ENCODE measurements at regions of chrX and their contacts with region 1.

Region 1: GRCh38 chrX:118495061-118495921 is at the start of gene DOCK11:
- DNase-seq: peak; percentile 91
- ATAC-seq: peak; percentile 76
- H3K4me3 Mint-ChIP-seq: peak within 1 kb of the TSS; percentile 99
- H3K27ac Mint-ChIP-seq: peak within 1 kb of the TSS; percentile 99
- H3K4me1 Mint-ChIP-seq: peaks cover 23% of the 10 kb centered on the region
- H3K27me3 Mint-ChIP-seq: no peaks in the 10 kb centered on the region
- total RNA-seq, gene DOCK11: 57.1 to 63.1 TPM

Region 2: DNA sequence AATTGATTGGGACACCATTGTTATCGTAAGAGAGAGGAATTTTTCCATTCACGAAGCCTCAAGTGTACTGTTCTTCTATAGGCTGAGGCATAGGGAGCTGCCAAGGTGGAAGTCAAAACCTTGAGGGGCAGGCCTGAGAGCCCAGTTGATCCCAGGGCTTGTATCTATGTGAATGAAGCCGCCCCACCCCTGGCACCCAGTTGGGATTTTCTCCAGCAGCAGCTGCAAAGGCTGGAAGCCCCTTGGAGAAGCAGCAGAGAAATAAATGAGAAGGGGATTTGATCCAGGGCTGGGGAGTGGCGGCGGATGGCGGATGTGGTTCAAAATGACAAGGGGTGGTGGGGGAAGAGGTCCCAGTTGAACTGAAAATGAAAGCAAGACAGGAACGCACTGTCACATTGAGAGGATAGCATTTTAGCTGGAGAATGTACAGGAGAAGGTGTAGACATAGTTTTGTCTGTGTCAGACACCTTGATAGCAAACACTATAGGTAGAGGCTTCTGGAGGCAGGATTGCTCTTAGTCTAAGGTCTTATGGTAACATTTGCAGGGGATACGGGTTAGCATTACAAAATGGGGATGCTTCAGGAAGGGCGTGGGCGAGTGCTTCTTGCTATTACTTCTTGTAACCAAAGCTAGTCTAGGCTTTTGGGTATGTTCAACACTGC is 32.9 kb after region 1 on chrX:
- CTCF ChIA-PET with region 1: interaction called, 20 read pairs
- DNase-seq: peak; percentile 77
- ATAC-seq: peak; percentile 82
- H3K4me3 Mint-ChIP-seq: peak overlapping the region; percentile 96
- H3K27ac Mint-ChIP-seq: peak overlapping the region; percentile 100
- H3K4me1 Mint-ChIP-seq: peaks cover 70% of the 10 kb centered on the region
- H3K27me3 Mint-ChIP-seq: no peaks in the 10 kb centered on the region

Region 3: DNA sequence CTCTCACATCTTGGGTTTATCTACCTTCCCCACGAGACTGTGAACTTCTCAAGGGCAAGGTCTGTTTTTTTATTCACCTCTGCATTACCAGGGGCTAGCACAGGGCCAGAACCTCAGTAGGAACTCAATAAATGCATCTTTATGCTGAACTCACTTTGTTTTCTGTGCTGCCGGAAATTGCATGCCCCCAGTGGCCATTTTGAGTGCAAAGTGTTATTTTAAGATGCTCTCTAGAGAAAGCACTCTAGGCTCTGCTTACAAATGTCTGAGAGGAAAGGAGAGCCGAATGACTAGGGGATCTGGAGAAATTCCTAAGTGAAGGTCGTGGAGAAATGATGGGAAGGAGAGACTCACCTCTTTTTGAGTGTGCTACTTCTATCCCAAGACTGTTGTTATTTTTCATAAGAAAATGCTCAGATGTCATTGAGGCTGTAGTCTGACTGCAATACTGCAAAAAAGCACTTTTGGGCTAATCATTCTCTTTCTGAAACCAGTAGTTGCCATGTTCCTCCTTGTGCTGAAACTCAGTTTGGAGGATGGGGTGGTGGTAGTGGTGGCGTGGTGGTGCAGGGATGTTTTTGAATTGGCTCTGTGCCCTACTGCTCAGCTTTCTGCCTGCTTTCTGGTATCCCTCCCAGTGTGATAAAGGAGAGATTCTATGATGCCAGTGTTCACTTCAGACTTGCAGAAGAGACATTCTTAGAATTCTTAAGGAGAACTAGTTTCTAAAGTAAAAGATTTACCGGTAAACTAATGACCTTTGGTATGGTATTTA is 41.6 kb after region 1 on chrX:
- CTCF ChIA-PET with region 1: interaction called, 18 read pairs
- DNase-seq: peak; percentile 71
- ATAC-seq: peak; percentile 77
- H3K4me3 Mint-ChIP-seq: peak overlapping the region; percentile 51
- H3K27ac Mint-ChIP-seq: peak overlapping the region; percentile 93
- H3K4me1 Mint-ChIP-seq: peaks cover 59% of the 10 kb centered on the region
- H3K27me3 Mint-ChIP-seq: no peaks in the 10 kb centered on the region

Region 4: DNA sequence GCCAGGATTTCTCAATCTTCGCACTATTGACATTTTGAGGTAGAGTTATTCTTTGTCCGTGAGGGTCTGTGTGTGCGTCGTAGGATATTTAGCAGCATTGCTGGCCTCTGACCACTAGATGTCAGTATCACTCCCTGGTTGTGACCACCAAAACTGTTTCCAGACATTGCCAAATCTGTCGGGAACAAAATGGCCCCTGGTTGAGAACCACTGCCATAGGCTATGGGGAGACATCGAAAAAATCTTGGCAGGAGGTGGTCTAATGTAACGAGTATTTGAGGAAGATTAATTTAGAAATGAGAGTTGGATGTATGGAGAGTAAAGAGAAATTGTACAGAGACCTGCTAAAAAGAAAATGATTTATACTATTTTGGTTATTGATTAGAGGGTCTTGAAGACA is 108.7 kb after region 1 on chrX:
- CTCF ChIA-PET with region 1: interaction called, 11 read pairs
- DNase-seq: peak; percentile 45
- ATAC-seq: peak; percentile 27
- H3K4me3 Mint-ChIP-seq: no peak overlapping the region
- H3K27ac Mint-ChIP-seq: no peak overlapping the region
- H3K4me1 Mint-ChIP-seq: peaks cover 4% of the 10 kb centered on the region
- H3K27me3 Mint-ChIP-seq: no peaks in the 10 kb centered on the region